ENCODE measurements at regions of chr21 and their contacts with region 1.

Region 1: GRCh38 chr21:42258153-42258884 is 39.4 kb downstream of the ABCG1 start:
- DNase-seq: peak; percentile 89
- H3K4me3 Mint-ChIP-seq: no peak overlapping the region
- H3K27ac Mint-ChIP-seq: no peak overlapping the region
- H3K4me1 Mint-ChIP-seq: peaks cover 17% of the 10 kb centered on the region
- H3K27me3 Mint-ChIP-seq: no peaks in the 10 kb centered on the region

Region 2: GRCh38 chr21:42140196-42140934 is 118.0 kb before region 1 on chr21:
- CTCF ChIA-PET with region 1: interaction called, 111 read pairs
- intact Hi-C with region 1: loop called (anchors 1 kb)
- DNase-seq: no peak
- H3K4me3 Mint-ChIP-seq: no peak overlapping the region
- H3K27ac Mint-ChIP-seq: no peak overlapping the region
- H3K4me1 Mint-ChIP-seq: peaks cover 2% of the 10 kb centered on the region
- H3K27me3 Mint-ChIP-seq: no peaks in the 10 kb centered on the region

Region 3: DNA sequence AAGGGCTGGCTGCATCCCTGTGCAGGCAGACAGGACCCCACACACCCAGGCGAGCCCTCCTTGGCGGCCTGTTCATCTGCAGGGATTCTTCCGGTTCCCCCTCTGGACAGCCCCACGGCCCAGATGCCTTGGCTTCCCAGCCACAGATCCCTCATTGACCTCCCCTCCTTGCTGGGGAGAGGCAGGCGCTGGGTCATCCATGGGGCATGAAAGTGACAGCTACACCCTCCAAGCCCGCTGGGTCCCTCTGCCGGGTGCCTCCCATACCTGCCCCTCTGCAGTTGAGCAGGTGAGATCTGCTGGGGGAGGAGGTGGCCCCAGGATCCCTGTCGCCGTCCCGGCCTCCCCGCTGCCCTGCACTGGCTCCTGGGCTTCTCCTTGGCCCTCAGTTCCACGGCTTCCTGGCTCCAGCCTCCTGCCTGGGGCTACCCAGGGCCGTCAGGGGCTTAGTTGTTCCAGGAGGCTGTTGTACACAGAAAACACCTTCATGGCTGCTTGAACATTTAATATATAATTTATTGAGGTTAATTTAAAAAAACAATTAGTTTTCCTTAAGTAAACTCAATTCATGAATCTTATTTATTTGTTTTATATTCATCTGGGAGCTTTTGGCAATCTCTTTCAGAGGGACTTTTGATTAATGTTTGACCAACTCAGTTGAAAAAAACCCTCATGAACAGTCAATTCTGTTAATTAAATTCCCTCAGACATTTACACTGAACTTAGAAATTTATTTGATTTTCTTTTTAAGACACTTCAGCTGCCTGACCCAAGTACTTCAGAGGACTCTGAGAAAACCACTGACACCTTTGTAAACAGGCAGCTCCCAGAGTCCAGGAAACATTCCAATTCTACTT is 107.0 kb before region 1 on chr21:
- CTCF ChIA-PET with region 1: interaction called, 111 read pairs
- intact Hi-C with region 1: no loop called
- DNase-seq: no peak
- H3K4me3 Mint-ChIP-seq: no peak overlapping the region
- H3K27ac Mint-ChIP-seq: no peak overlapping the region
- H3K4me1 Mint-ChIP-seq: no peaks in the 10 kb centered on the region
- H3K27me3 Mint-ChIP-seq: no peaks in the 10 kb centered on the region

Region 4: DNA sequence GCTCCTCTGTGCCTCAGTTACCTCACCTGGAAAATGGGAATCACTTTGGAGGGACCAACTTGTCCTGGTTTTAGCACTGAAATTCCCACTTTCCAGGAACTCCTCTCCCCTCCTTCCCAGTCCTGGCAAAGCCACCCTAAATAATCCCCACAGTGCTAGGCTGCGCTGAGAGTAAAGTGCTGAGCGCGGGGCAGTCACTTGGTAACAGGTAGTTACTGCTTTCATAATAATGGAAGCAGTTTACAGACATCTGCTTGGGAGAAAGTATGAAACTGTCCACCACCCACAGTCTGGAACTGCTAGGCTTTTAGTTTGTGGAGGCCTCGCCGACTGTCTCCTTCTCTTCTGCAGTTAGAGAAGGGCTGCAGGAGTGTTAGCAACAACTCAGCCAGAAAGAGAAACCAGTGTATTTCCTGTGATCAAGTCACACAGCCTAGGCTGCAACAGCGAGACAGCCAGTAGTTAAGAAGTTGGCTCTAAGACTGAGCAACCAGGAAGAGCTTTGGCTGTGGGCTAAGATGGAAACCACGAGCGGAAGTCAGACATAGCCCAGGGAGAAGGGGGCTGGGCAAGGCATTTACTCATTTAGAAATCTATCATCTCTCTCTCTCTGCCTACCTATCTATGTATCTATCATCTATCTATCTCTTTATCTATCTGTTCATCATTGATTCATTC is 70.2 kb before region 1 on chr21:
- CTCF ChIA-PET with region 1: interaction called, 19 read pairs
- intact Hi-C with region 1: no loop called
- DNase-seq: peak; percentile 94
- H3K4me3 Mint-ChIP-seq: peak overlapping the region; percentile 60
- H3K27ac Mint-ChIP-seq: peak overlapping the region; percentile 95
- H3K4me1 Mint-ChIP-seq: peaks cover 70% of the 10 kb centered on the region
- H3K27me3 Mint-ChIP-seq: no peaks in the 10 kb centered on the region

Region 5: GRCh38 chr21:42220138-42220701 is 38.1 kb before region 1 on chr21:
- CTCF ChIA-PET with region 1: interaction called, 16 read pairs
- intact Hi-C with region 1: loop called (anchors 1 kb)
- DNase-seq: peak; percentile 86
- H3K4me3 Mint-ChIP-seq: peak overlapping the region; percentile 82
- H3K27ac Mint-ChIP-seq: peak overlapping the region; percentile 87
- H3K4me1 Mint-ChIP-seq: peaks cover 14% of the 10 kb centered on the region
- H3K27me3 Mint-ChIP-seq: no peaks in the 10 kb centered on the region

Region 6: DNA sequence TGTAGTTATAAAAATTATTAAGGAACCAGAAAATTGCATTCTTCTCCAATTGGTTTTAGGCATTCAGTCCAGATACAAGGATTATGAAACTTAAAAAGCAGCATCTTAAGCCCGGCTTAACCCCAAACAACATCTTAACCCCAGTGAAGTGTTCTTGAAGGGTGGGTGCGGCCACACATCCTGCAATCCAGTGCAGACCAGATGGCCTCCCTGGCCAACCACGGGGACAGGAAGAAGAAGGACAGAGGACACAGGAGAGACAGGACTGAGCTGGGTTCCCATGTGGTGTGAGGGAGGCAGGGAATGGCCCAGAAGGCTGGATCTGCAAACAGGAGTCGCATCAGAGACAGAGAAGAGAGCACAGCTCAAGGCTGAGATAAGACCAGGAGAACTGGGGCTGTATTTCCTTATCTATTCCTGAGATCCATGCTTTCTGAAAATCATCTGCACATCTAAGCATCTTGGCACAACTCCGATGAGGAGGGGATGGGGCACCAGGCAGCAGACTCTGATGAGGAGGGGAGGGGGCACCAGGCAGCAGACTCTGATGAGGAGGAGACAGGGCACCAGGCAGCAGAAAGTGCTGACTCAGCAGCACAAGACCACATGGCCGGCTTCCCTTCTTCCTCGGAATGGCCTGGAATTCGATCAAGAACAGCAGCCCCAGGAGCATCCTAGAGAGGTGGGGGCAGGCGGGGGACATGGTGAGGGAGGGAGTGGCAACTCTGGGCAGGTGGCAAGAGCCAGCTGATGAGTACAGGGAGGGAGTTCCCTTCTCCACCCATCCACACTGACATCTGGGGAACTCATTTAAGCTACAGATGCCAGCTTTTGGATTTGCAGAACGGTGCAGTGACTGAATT is 12.8 kb before region 1 on chr21:
- CTCF ChIA-PET with region 1: interaction called, 44 read pairs
- intact Hi-C with region 1: no loop called
- DNase-seq: no peak
- H3K4me3 Mint-ChIP-seq: no peak overlapping the region
- H3K27ac Mint-ChIP-seq: no peak overlapping the region
- H3K4me1 Mint-ChIP-seq: peaks cover 4% of the 10 kb centered on the region
- H3K27me3 Mint-ChIP-seq: no peaks in the 10 kb centered on the region

Region 7: DNA sequence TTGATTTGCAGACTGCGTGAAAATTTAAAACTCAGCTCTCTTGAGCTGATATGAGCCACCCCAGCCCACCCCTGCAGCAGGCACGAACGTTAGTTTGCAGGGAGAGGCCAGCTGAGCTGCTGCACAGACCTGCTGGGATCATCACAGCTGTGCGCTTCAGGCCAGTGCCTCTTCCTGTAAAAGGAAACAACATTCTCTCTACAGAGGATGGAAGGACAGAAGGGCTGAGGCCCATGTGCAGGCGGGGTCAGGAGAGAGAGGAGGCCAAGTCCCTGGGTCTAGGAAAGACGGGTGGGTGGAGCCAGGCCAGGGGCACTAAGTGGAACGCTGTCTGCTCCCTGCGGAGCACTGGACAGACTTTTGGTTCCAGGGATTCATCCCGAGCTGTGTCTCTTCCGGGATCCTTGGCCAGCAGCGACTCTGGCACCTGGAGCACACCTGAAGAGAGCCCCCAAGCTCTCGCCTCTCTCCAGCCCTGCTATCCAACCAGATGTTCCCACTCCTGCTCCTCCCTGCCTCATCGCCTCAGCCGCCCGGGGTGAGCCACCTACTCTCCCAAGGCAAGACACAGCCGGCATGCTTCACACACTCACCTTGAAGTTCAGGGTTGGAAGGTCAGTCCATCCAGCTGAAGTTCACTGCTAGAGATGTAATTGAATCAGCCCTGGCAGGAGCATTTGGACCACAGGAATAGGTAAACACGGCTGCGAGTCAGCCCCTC is 195.3 kb after region 1 on chr21:
- CTCF ChIA-PET with region 1: no interaction called
- intact Hi-C with region 1: no loop called
- DNase-seq: no peak
- H3K4me3 Mint-ChIP-seq: no peak overlapping the region
- H3K27ac Mint-ChIP-seq: no peak overlapping the region
- H3K4me1 Mint-ChIP-seq: peaks cover 37% of the 10 kb centered on the region
- H3K27me3 Mint-ChIP-seq: no peaks in the 10 kb centered on the region

Measured in activated naive CD4-positive, alpha-beta T cell treated with anti-CD3 and anti-CD28 coated beads for 36 hours (primary cell).